ENCODE measurements at regions of chr13 and their contacts with region 1.

Region 1: DNA sequence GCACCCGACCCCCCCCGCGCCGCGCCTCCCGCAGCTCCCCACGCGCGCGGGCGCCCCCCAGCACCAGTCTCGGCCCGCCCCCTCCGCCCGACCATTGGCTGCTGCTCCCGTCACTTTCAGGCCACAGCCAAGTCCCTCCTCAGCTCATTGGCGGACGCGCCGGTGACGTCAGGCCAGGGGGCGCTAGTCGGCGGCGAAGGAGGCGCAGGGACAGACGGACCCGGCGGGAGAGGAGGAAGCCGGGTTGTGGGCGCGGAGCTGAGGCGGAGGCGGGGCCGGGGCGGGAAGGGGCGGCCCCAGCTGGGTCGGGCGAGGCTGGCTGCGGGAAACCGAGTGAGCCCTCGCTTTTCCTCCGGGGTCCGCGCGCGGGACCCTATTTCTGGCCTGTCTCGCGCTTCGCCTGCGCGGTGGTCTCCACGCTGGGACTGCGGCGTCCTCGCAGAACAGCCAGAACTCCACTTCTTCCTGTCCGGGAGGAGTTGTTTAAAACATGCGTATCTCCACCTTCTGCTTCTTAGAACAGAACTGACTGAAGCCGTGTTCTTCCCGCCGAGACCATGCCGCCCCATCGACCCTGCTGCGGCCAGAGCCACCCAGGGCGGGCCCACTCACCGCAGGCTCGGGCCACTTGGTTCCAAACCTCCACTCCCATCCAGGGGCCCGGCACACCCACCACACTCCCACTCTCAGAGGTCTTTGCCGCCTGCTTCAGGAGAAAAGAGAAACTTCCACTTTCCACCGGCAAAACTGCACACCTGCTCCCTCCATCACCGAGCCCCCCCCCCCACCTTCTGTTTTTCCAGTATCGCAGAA is 459 bp upstream of the TMTC4 start:
- DNase-seq: peak; percentile 97 to 100 (median 99)
- ATAC-seq: peak; percentile 96
- H3K4me3 ChIP-seq: peak overlapping the region; percentile 93
- H3K4me3 Mint-ChIP-seq: peak overlapping the region; percentile 86 to 95 (median 90)
- H3K27ac ChIP-seq: peak overlapping the region; percentile 84
- H3K27ac Mint-ChIP-seq: peak overlapping the region; percentile 64 to 91 (median 86)
- H3K4me1 ChIP-seq: peaks cover 7 to 9% of the 10 kb centered on the region in 2 donors
- H3K4me1 Mint-ChIP-seq: peaks cover 17 to 38% (median 30%) of the 10 kb centered on the region in 7 donors
- H3K27me3 ChIP-seq: no peaks in the 10 kb centered on the region
- H3K27me3 Mint-ChIP-seq: peaks cover 0 to 20% (median 0%) of the 10 kb centered on the region in 5 donors

Region 2: GRCh38 chr13:99980201-99980823 is 694.7 kb before region 1 on chr13:
- CTCF ChIA-PET with region 1: no interaction called
- POLR2A ChIA-PET with region 1: no interaction called
- intact Hi-C with region 1: loop called in 1 of 2 experiments (anchors 5 kb)
- DNase-seq: peak in 6 of 9 donors; percentile 44 to 64 (median 55)
- ATAC-seq: peak; percentile 78
- H3K4me3 ChIP-seq: no peak overlapping the region
- H3K4me3 Mint-ChIP-seq: peak overlapping the region in 4 of 10 donors; percentile 42 to 68 (median 59)
- H3K27ac ChIP-seq: no peak overlapping the region
- H3K27ac Mint-ChIP-seq: no peak overlapping the region
- H3K4me1 ChIP-seq: peaks cover 8 to 18% of the 10 kb centered on the region in 2 donors
- H3K4me1 Mint-ChIP-seq: peaks cover 0 to 35% (median 23%) of the 10 kb centered on the region in 7 donors
- H3K27me3 ChIP-seq: peaks cover 22 to 66% of the 10 kb centered on the region in 2 donors
- H3K27me3 Mint-ChIP-seq: peaks cover 51 to 71% (median 54%) of the 10 kb centered on the region in 5 donors

Region 3: GRCh38 chr13:100573121-100573520 is 101.9 kb before region 1 on chr13:
- CTCF ChIA-PET with region 1: interaction called, 3 read pairs
- POLR2A ChIA-PET with region 1: interaction called, 3 read pairs
- intact Hi-C with region 1: loop called (anchors 1 kb)
- DNase-seq: peak; percentile 51 to 74 (median 63)
- ATAC-seq: peak; percentile 92
- H3K4me3 ChIP-seq: no peak overlapping the region
- H3K4me3 Mint-ChIP-seq: no peak overlapping the region
- H3K27ac ChIP-seq: no peak overlapping the region
- H3K27ac Mint-ChIP-seq: peak overlapping the region in 1 of 9 donors; percentile 24
- H3K4me1 ChIP-seq: peaks cover 0 to 6% of the 10 kb centered on the region in 2 donors
- H3K4me1 Mint-ChIP-seq: peaks cover 9 to 28% (median 16%) of the 10 kb centered on the region in 7 donors
- H3K27me3 ChIP-seq: no peaks in the 10 kb centered on the region
- H3K27me3 Mint-ChIP-seq: no peaks in the 10 kb centered on the region

Region 4: GRCh38 chr13:100721885-100722512 is 46.9 kb after region 1 on chr13:
- CTCF ChIA-PET with region 1: no interaction called
- POLR2A ChIA-PET with region 1: no interaction called
- intact Hi-C with region 1: loop called in 1 of 2 experiments (anchors 1 kb)
- DNase-seq: peak in 7 of 9 donors; percentile 13 to 42 (median 36)
- ATAC-seq: peak; percentile 36
- H3K4me3 ChIP-seq: no peak overlapping the region
- H3K4me3 Mint-ChIP-seq: no peak overlapping the region
- H3K27ac ChIP-seq: no peak overlapping the region
- H3K27ac Mint-ChIP-seq: no peak overlapping the region
- H3K4me1 ChIP-seq: no peaks in the 10 kb centered on the region
- H3K4me1 Mint-ChIP-seq: peaks cover 0 to 6% (median 1%) of the 10 kb centered on the region in 7 donors
- H3K27me3 ChIP-seq: no peaks in the 10 kb centered on the region
- H3K27me3 Mint-ChIP-seq: peaks cover 5 to 30% (median 25%) of the 10 kb centered on the region in 5 donors

Region 5: GRCh38 chr13:102394158-102395053 is 1719.4 kb after region 1 on chr13:
- CTCF ChIA-PET with region 1: no interaction called
- POLR2A ChIA-PET with region 1: no interaction called
- intact Hi-C with region 1: loop called in 1 of 2 experiments (anchors 5 kb)
- DNase-seq: peak; percentile 91 to 98 (median 95)
- ATAC-seq: peak; percentile 94
- H3K4me3 ChIP-seq: peak overlapping the region; percentile 96
- H3K4me3 Mint-ChIP-seq: peak overlapping the region; percentile 85 to 93 (median 90)
- H3K27ac ChIP-seq: peak overlapping the region; percentile 78
- H3K27ac Mint-ChIP-seq: peak overlapping the region in 8 of 9 donors; percentile 82 to 94 (median 88)
- H3K4me1 ChIP-seq: peaks cover 0 to 12% of the 10 kb centered on the region in 2 donors
- H3K4me1 Mint-ChIP-seq: peaks cover 6 to 25% (median 20%) of the 10 kb centered on the region in 7 donors
- H3K27me3 ChIP-seq: no peaks in the 10 kb centered on the region
- H3K27me3 Mint-ChIP-seq: peaks cover 13 to 41% (median 22%) of the 10 kb centered on the region in 5 donors